Right cardiac atrium (tissue), 5 donors: ENCODE measurements at regions of chr9 and their contacts with region 1.

Region 1: DNA sequence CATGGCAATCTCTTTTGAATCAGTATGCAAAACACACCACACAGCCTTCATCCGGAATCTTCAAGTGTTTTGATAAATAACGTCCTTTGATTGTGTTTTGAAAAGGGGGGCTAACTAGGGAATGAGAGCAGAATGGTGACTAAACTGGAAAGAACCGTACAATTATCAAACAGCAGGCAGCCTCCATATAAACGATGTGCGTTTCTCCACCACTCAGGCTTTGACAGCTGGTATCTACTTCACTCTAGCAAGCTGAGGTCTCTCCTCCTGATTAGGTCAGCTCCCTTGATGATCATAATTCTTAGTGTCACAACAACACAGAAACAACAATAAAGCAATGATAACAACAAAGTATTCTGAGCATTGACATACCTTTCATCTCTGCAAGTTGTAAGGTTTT is 465.9 kb downstream of the TUSC1 start:
- DNase-seq: no peak
- ATAC-seq: no peak
- H3K4me3 ChIP-seq: no peak overlapping the region
- H3K27ac ChIP-seq: no peak overlapping the region
- H3K4me1 ChIP-seq: no peaks in the 10 kb centered on the region
- H3K27me3 ChIP-seq: no peaks in the 10 kb centered on the region

Region 2: DNA sequence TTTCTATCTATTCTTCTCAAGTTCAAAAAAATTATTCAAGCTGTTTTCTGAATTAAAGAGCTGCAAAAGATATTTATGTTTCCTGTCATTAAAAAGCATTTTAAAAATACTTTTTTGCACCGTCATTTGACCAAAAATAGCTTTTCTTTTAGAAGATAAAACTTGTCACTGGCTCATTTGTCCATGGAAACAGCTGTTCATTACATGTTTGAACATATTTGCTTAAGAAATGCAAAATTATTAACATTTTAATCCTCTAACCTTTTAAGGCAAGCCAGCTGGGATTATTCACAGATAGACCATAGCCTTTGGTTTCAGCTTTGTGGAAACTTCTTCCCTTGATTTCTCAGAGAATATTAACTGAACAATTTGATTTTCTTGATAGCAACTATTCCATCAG is 72.0 kb after region 1 on chr9:
- intact Hi-C with region 1: loop called in 1 of 4 experiments (anchors 10 kb)
- DNase-seq: no peak
- ATAC-seq: no peak
- H3K4me3 ChIP-seq: no peak overlapping the region
- H3K27ac ChIP-seq: no peak overlapping the region
- H3K4me1 ChIP-seq: no peaks in the 10 kb centered on the region
- H3K27me3 ChIP-seq: no peaks in the 10 kb centered on the region